PC-9 (cell line): ENCODE measurements at regions of chr7 and their contacts with region 1.

Region 1: DNA sequence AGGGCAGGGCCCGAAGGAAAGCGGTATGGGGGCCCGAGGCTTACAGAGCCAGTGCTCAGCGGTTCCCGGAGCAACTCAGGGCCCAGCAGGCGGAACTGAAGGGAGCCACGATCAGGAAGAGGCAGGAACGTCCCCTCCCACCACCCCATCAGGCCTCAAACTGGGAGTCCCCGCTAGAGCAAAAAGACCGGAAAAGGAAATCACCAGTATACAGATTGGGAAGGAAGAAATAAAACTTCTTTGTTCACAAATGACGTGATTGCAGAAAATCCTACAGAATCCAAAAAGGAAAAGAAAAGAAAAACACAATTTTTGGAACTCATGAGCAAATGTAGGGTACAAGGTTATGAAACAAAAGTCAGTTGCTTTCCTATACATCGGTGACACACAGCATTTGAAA is 21.6 kb upstream of the ZFAND2A start:
- DNase-seq: no peak
- H3K4me3 ChIP-seq: no peak overlapping the region
- H3K27ac ChIP-seq: no peak overlapping the region
- H3K4me1 ChIP-seq: peaks cover 2% of the 10 kb centered on the region; the same call in 1 of the 2 replicates
- H3K27me3 ChIP-seq: peaks cover 54% of the 10 kb centered on the region
- CTCF ChIP-seq: no peak

Region 2: DNA sequence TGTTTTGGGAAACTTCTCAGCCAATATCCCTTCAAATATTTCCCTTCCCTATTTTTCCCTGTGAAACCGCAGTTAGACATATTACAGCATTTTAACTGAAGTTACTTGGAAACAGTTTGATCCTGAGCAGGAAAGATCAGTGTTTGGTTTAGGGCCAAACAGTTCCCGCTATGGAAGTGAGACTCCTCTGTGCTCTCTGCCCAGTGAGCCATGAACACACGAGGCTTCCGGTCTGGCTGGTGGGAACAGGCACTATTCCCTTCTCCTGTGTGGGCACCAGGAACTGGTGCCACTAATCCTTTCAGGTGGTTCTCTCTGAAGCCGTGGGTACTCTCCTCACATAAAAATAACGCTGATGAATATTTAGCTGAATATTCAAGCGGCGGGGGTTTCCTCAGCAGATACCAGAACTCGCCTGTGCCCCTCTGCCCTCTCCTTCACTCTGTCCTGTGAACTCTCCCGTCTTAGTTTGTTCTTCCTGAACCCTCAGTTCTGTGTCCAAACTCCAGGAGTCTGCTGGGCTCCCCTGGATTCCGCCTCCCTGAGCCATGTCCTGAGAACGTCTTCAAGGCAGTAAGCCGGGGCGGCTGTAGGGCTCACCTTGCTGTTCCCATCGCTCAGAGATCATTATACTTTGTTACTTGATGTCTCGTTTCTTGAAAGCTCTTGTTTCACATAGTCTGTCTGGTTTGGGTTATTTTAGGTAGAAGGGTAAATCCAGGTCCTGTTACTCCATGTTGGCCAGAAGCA is 865.9 kb before region 1 on chr7:
- CTCF ChIA-PET with region 1: no interaction called
- POLR2A ChIA-PET with region 1: interaction called, 14 read pairs
- intact Hi-C with region 1: no loop called
- DNase-seq: no peak
- H3K4me3 ChIP-seq: no peak overlapping the region
- H3K27ac ChIP-seq: no peak overlapping the region
- H3K4me1 ChIP-seq: peaks cover 7% of the 10 kb centered on the region
- H3K27me3 ChIP-seq: peaks cover 88% of the 10 kb centered on the region
- CTCF ChIP-seq: no peak

Region 3: DNA sequence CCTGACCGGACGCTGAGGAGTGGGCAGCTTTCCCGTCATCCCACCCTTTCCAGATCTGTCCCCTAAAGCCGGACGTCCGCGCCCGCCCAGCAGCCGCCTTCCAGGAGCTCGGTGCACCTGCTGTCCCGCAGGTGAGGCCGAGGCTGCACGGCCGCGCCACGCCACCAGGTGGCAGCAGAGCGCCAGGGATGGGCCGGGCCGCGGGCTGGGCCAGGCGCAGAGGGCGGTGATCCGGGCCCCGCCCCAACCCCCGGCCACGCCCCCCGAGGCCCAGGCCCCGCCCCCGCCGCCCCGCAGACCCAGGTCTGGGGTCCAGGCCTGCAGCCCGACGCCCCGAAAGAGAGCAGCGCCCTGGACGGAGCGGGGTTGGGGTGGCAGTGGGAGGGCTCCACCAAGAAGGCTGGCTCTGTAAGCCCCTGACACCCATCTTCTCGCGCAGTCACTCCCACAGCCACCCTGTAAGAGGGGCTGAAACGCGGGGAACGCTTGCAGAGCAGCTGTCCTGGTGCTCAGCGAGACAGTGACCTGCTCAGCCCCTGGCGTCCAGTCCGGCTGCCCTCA is 859.4 kb before region 1 on chr7:
- CTCF ChIA-PET with region 1: no interaction called
- POLR2A ChIA-PET with region 1: no interaction called
- intact Hi-C with region 1: loop called (anchors 2 kb)
- DNase-seq: peak; percentile 45 to 92
- H3K4me3 ChIP-seq: no peak overlapping the region
- H3K27ac ChIP-seq: no peak overlapping the region
- H3K4me1 ChIP-seq: peaks cover 20% of the 10 kb centered on the region
- H3K27me3 ChIP-seq: peaks cover 58% of the 10 kb centered on the region
- CTCF ChIP-seq: peak; percentile 83

Region 4: GRCh38 chr7:1193593-1194424 is 12.2 kb after region 1 on chr7:
- CTCF ChIA-PET with region 1: no interaction called
- POLR2A ChIA-PET with region 1: no interaction called
- intact Hi-C with region 1: no loop called
- DNase-seq: peak; percentile 54 to 80
- H3K4me3 ChIP-seq: no peak overlapping the region
- H3K27ac ChIP-seq: no peak overlapping the region
- H3K4me1 ChIP-seq: no peaks in the 10 kb centered on the region
- H3K27me3 ChIP-seq: peaks cover 57% of the 10 kb centered on the region
- CTCF ChIP-seq: peak; percentile 76